Activated CD4-positive, alpha-beta T cell treated with anti-CD3 and anti-CD28 coated beads for 36 hours (primary cell): ENCODE measurements at regions of chrX and their contacts with region 1.

Region 1: DNA sequence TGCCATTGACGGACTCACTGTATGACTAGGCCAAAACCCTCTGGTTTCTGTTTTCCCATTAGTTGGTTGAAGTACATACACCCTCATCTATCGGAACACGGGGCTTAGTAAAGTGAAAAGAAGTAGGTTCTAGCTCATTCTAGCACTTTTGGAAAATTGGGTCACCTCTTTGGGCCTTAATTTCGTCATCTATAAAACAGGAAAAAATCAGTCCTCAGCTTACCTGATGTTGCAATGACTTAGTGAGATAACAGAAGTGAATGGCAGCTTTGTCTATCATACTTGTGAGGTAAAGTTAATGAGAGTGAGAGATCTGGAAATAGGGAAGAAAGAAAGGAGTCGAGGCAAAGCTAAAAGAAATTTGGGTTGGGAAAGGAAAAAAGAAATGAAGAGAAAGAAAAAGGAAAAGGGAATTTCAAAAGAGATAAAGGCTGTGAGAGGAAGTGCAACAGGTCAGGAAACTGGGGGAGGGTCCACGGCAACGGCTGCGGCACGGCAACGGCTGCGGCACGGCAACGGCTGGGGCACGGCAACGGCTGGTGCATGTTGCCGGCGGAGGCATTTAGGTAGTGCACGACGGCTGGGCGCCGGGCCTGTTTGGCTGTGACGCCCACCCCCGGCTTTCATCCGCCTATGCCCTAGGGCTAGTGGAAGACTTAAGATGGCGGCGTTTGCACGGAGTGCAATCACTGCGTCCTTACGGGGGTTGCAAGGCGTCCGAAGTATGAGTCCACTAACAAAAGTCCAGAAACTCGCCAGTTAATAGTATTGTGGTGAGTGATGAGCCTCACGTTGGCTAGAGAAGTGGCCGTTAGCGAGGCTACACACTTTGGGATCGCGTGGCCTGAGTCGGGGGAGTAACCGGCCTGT is 360.1 kb upstream of the ZCCHC13 start:
- DNase-seq: peak; percentile 91
- ATAC-seq: peak; percentile 99
- H3K4me3 Mint-ChIP-seq: peak overlapping the region; percentile 89
- H3K27ac Mint-ChIP-seq: peak overlapping the region; percentile 96
- H3K4me1 Mint-ChIP-seq: peaks cover 15% of the 10 kb centered on the region
- H3K27me3 Mint-ChIP-seq: no peaks in the 10 kb centered on the region

Region 2: DNA sequence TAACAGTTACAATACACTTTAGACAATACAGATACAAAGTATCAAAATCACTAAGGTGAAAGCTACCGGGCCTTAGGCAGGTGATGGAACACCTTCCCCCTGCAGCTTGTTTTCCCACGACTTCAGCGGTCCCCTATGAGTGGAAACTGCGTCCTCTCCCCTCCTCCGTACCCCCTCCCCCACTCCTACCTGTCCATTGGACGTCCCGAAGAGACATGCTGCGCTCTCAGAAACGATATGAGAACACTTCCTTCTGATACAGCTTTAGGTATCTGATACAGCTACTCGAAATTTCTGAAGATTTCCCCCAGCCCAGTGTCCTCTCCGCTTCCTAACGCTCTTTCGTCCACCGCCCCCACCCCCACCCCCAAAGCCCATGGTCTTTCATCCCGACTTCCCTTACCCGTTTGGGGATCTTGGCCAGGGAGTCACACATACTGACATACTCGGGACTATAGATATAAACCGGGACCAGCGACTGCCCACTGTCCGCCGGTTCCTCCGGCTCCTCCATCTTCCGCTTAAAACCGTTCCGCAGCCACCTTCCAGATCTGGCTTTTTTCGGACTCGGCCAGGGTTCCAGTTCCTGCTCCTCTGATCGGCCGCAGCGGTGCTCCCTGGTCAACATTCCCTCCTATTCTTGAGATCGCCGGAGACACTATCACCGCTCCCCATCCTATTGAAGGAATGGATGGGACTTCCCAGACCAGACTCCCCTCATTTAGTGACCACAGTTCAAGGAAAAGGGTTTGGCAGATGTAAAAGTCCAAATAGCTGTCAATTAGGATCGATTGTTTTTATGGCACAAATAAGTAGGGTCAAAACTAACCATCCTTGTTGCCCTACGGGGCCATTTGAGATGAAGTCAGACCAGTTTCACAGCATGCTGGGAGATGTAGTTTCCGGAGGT is 1371.4 kb before region 1 on chrX and contains the start of gene HDAC8:
- CTCF ChIA-PET with region 1: no interaction called
- POLR2A ChIA-PET with region 1: no interaction called
- intact Hi-C with region 1: loop called in 1 of 2 experiments (anchors 10 kb)
- DNase-seq: peak; percentile 59
- ATAC-seq: peak; percentile 90
- H3K4me3 Mint-ChIP-seq: peak within 1 kb of the TSS; percentile 97
- H3K27ac Mint-ChIP-seq: peak within 1 kb of the TSS; percentile 95
- H3K4me1 Mint-ChIP-seq: peaks cover 9% of the 10 kb centered on the region
- H3K27me3 Mint-ChIP-seq: no peaks in the 10 kb centered on the region
- total RNA-seq, gene HDAC8: 13.3 to 16.9 TPM

Region 3: GRCh38 chrX:73562984-73563737 is 380.8 kb before region 1 on chrX and contains the start of gene CHIC1:
- CTCF ChIA-PET with region 1: no interaction called
- POLR2A ChIA-PET with region 1: no interaction called
- intact Hi-C with region 1: loop called in 1 of 2 experiments (anchors 2 kb)
- DNase-seq: peak; percentile 80
- ATAC-seq: peak; percentile 78
- H3K4me3 Mint-ChIP-seq: peak within 1 kb of the TSS; percentile 86
- H3K27ac Mint-ChIP-seq: peak within 1 kb of the TSS; percentile 99
- H3K4me1 Mint-ChIP-seq: peaks cover 12% of the 10 kb centered on the region
- H3K27me3 Mint-ChIP-seq: no peaks in the 10 kb centered on the region
- total RNA-seq, gene CHIC1: 3.7 to 4.7 TPM

Region 4: GRCh38 chrX:73830489-73831414 is 113.2 kb before region 1 on chrX:
- CTCF ChIA-PET with region 1: no interaction called
- POLR2A ChIA-PET with region 1: no interaction called
- intact Hi-C with region 1: no loop called
- DNase-seq: no peak
- ATAC-seq: no peak
- H3K4me3 Mint-ChIP-seq: no peak overlapping the region
- H3K27ac Mint-ChIP-seq: no peak overlapping the region
- H3K4me1 Mint-ChIP-seq: no peaks in the 10 kb centered on the region
- H3K27me3 Mint-ChIP-seq: peaks cover 6% of the 10 kb centered on the region

Region 5: DNA sequence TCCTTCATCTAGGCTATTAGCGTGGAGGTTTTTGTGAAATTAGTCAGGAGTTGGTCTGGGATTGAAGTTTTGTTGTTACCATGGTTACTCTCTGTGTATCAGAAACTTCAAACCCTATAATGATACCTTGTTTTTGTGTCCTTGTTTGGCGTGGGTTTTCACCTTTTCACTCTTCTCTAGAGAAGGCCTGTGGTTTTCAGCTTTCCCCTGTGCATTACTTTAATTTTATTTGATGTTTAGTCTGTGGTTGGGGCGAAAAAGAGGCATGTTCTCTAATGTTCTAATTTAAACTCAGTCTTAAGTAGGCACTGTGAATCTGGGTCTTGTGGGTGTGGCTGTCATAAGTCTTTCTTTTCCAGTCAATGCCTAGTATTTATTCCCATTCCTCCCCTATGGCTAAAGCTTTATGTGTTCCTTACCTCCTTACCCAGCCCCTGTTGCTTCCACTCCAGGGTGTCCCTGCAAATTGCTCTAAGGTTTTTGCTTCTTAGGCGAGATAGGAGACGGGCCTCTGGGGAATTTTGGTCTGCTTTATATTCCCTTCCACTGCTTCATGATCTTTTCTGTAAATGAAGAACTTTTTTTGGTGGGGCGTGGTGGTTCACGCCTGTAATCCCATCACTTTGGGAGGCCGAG is 33.7 kb after region 1 on chrX:
- CTCF ChIA-PET with region 1: no interaction called
- POLR2A ChIA-PET with region 1: no interaction called
- intact Hi-C with region 1: loop called (anchors 1 kb)
- DNase-seq: peak; percentile 6
- ATAC-seq: peak; percentile 89
- H3K4me3 Mint-ChIP-seq: no peak overlapping the region
- H3K27ac Mint-ChIP-seq: peak overlapping the region; percentile 58
- H3K4me1 Mint-ChIP-seq: peaks cover 34% of the 10 kb centered on the region
- H3K27me3 Mint-ChIP-seq: no peaks in the 10 kb centered on the region